Activated CD4-positive, alpha-beta memory T cell treated with anti-CD3 and anti-CD28 coated beads, Interleukin-2, amount 10 ng/mL, durations not matched to agents 7 days and 5 days (primary cell): ENCODE measurements at regions of chr3 and their contacts with region 1.

Region 1: DNA sequence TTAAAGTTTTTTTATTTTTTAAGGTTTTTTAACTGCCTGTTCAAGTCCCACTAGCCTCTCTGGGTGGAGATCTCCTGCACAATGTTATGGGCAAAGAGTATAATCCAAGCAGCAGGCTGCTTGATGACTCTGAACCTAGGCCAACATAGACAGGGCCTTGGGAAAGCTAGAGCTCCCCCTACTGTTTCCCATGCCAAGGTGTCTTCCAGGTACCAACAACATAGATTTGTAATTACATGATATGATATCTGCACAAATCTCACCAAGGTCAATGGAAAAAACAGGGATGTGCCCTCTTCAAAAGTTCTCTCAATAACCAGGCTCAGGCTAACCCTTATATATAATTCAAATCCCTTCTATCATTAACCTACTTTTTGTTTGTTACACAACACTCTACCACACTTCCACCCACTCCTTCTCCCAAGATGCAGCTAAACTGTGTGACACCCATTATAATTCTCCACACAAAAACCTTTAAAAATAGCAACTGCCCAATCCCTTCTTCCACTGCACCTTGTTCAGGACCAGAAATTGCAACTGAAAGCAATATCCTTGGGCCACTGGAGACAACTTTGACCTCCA is 43.8 kb downstream of the RBM15B start:
- DNase-seq: peak; percentile 52
- H3K4me3 Mint-ChIP-seq: no peak overlapping the region
- H3K27ac Mint-ChIP-seq: peak overlapping the region; percentile 33
- H3K4me1 Mint-ChIP-seq: peaks cover 4% of the 10 kb centered on the region
- H3K27me3 Mint-ChIP-seq: no peaks in the 10 kb centered on the region

Region 2: DNA sequence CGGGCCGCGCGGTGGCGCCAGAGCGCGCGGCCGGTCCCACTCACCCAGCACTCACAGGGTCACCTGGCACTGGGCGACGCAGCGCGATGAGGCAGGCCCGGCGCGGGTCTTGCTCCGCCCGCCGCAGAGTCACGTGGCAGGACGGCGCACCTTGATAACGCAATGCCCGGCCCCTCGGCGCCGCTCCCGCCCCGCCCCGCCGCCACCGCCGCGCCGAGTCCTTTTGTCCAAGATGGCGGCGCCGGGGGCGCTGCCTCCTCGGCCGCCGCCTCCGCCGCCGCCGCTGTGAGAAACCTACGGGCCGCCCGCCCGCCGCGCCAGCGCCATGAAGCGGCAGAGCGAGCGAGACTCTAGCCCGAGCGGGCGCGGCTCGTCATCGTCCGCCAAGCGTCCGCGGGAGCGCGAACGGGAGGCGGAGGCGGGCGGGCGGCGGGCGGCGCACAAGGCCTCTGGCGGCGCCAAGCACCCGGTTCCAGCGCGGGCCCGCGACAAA is 43.7 kb before region 1 on chr3 and contains the start of gene RBM15B:
- CTCF ChIA-PET with region 1: interaction called, 45 read pairs
- POLR2A ChIA-PET with region 1: no interaction called
- DNase-seq: peak; percentile 98
- H3K4me3 Mint-ChIP-seq: peak within 1 kb of the TSS; percentile 83
- H3K27ac Mint-ChIP-seq: peak within 1 kb of the TSS; percentile 88
- H3K4me1 Mint-ChIP-seq: peaks cover 82% of the 10 kb centered on the region
- H3K27me3 Mint-ChIP-seq: no peaks in the 10 kb centered on the region
- total RNA-seq, gene RBM15B: 24.5 to 25.4 TPM

Region 3: GRCh38 chr3:51445544-51446280 is 10.9 kb after region 1 on chr3:
- CTCF ChIA-PET with region 1: interaction called, 16 read pairs
- POLR2A ChIA-PET with region 1: interaction called, 3 read pairs
- DNase-seq: no peak
- H3K4me3 Mint-ChIP-seq: no peak overlapping the region
- H3K27ac Mint-ChIP-seq: no peak overlapping the region
- H3K4me1 Mint-ChIP-seq: peaks cover 28% of the 10 kb centered on the region
- H3K27me3 Mint-ChIP-seq: no peaks in the 10 kb centered on the region